Testis (tissue), 5 donors: ENCODE measurements at regions of chr2 and their contacts with region 1.

Region 1: DNA sequence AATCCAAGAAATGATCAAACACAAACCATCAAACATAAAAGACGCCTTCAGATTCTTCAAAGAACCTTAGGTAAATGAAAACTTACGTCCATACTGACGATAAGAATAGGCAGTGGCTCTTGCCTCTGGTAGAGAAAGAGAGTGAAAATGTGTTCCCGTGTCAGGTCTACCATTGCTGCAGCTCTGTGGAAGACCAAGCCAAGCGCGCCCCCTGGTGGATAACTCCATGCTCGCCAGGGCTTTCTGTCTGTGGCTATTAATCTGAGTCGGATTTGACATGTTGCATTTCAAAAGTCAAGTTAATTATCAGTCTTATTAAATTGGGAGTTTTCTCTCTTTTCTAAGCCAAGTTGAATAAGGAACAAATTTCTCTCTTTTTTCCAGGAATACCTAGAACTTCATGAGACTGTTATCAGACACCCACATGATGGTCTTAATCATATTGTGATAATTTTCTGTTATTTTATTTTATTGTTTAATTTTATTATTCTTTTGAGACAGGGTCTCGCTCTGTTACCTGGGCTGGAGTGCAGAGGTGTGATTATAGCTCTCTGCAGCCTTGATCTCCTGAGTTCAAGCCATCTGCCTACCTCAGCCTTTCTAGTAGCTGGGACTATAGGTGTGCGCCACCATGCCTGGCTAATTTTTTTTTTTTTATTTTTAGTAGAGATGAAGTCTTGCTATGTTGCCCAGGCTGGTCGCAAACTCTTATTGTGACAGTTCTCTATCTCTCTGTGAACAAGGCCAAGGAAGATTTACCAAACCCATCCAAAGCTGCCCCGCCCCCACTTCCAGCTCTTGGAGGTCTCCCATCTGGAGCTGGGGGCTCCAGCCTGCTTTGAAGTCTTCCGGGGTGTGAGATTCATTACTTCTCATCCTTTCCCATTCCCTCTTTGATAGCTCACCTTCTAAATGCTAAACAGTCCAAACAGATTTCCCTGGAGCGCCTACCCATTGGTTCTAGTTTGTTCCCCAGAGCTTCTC is 15.8 kb upstream of the ZAP70 start:
- DNase-seq: peak; percentile 96
- H3K4me3 ChIP-seq: no peak overlapping the region
- H3K27ac ChIP-seq: no peak overlapping the region
- H3K4me1 ChIP-seq: no peaks in the 10 kb centered on the region
- H3K27me3 ChIP-seq: no peaks in the 10 kb centered on the region
- CTCF ChIP-seq: peak; percentile 98
- POLR2A ChIP-seq: no peak

Region 2: GRCh38 chr2:96065381-96065930 is 1632.1 kb before region 1 on chr2:
- intact Hi-C with region 1: loop called (anchors 10 kb)
- DNase-seq: no peak
- H3K4me3 ChIP-seq: no peak overlapping the region
- H3K27ac ChIP-seq: no peak overlapping the region
- H3K4me1 ChIP-seq: no peaks in the 10 kb centered on the region
- H3K27me3 ChIP-seq: no peaks in the 10 kb centered on the region
- CTCF ChIP-seq: no peak
- POLR2A ChIP-seq: no peak

Region 3: GRCh38 chr2:97982621-97983020 is 285.1 kb after region 1 on chr2:
- intact Hi-C with region 1: no loop called
- DNase-seq: no peak
- H3K4me3 ChIP-seq: no peak overlapping the region
- H3K27ac ChIP-seq: no peak overlapping the region
- H3K4me1 ChIP-seq: no peaks in the 10 kb centered on the region
- H3K27me3 ChIP-seq: no peaks in the 10 kb centered on the region
- CTCF ChIP-seq: no peak
- POLR2A ChIP-seq: no peak